ENCODE measurements at regions of chr7 and their contacts with region 1.

Region 1: GRCh38 chr7:22732556-22733126 is 5.6 kb downstream of the IL6 start:
- DNase-seq: peak; percentile 45
- ATAC-seq: no peak
- H3K4me3 ChIP-seq: no peak overlapping the region
- H3K27ac ChIP-seq: no peak overlapping the region
- H3K4me1 ChIP-seq: peaks cover 5% of the 10 kb centered on the region
- H3K27me3 ChIP-seq: no peaks in the 10 kb centered on the region
- CTCF ChIP-seq: peak; percentile 32
- POLR2A ChIP-seq: peak; percentile 94
- RAD21 ChIP-seq: peak; percentile 45

Region 2: GRCh38 chr7:22782616-22783232 is 50.1 kb after region 1 on chr7:
- CTCF ChIA-PET with region 1: interaction called, 10 read pairs
- POLR2A ChIA-PET with region 1: interaction called, 4 read pairs
- dilution Hi-C with region 1: no loop called
- in situ Hi-C with region 1: no loop called
- intact Hi-C with region 1: no loop called
- DNase-seq: peak; percentile 54
- ATAC-seq: peak; percentile 50; the same call in 1 of the 2 replicates
- H3K4me3 ChIP-seq: no peak overlapping the region
- H3K27ac ChIP-seq: peak overlapping the region; percentile 98
- H3K4me1 ChIP-seq: peaks cover 9% of the 10 kb centered on the region
- H3K27me3 ChIP-seq: no peaks in the 10 kb centered on the region
- CTCF ChIP-seq: peak; percentile 63
- POLR2A ChIP-seq: no peak
- RAD21 ChIP-seq: peak; percentile 55